ENCODE measurements at regions of chr13 and their contacts with region 1.

Region 1: DNA sequence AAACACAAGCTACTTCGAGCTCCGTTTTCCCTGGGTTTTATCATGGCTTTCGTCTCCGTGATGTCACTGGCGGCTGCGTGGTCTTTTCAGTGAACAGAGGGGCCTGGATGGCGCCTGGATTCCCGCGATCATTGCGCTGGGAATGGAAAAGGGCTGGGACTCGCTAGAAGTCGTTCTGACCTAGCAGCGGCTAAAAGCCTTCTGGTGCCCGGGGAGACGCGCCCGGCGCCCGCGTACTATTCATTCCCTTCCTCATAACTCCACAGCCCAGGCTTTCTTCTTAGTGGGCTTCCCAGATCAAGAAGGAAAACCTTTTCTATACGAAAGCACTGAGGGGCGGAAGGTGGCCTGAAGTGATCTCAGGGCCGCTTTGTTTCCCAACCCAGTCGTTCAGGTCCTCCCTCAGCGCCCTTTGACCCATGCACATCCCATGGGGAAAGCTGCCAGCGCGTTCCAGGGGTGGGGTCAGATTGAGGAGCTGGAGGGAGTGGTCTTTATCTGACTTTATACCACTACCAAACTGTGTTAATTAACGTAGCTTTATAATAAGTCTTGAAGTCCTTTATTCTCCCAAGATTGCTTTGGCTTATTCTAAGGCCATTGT is 96.6 kb downstream of the ELF1 start:
- DNase-seq: no peak
- H3K4me3 ChIP-seq: no peak overlapping the region
- H3K27ac ChIP-seq: no peak overlapping the region
- H3K4me1 ChIP-seq: peaks cover 0 to 6% of the 10 kb centered on the region in 2 donors
- H3K27me3 ChIP-seq: no peaks in the 10 kb centered on the region
- CTCF ChIP-seq: no peak

Region 2: GRCh38 chr13:41029629-41030028 is 107.1 kb after region 1 on chr13:
- intact Hi-C with region 1: no loop called
- DNase-seq: no peak
- H3K4me3 ChIP-seq: no peak overlapping the region
- H3K27ac ChIP-seq: no peak overlapping the region
- H3K4me1 ChIP-seq: peaks cover 0 to 4% of the 10 kb centered on the region in 2 donors
- H3K27me3 ChIP-seq: no peaks in the 10 kb centered on the region
- CTCF ChIP-seq: no peak

Region 3: GRCh38 chr13:41132512-41133152 is 210.1 kb after region 1 on chr13 and contains the start of gene KBTBD6:
- intact Hi-C with region 1: loop called (anchors 10 kb)
- DNase-seq: peak; percentile 92 to 98
- H3K4me3 ChIP-seq: peak within 1 kb of the TSS; percentile 77 to 83
- H3K27ac ChIP-seq: peak within 1 kb of the TSS; percentile 76 to 77
- H3K4me1 ChIP-seq: peaks cover 0 to 10% of the 10 kb centered on the region in 2 donors
- H3K27me3 ChIP-seq: no peaks in the 10 kb centered on the region
- CTCF ChIP-seq: no peak
- total RNA-seq, gene KBTBD6: 2.0 TPM

Measured in ascending aorta (tissue), 2 donors.